Calu3 (cell line): ENCODE measurements at regions of chr16 and their contacts with region 1.

Region 1: GRCh38 chr16:48542020-48542473 is 67.9 kb downstream of the N4BP1 start:
- DNase-seq: peak; percentile 55
- H3K4me3 Mint-ChIP-seq: no peak overlapping the region
- H3K27ac Mint-ChIP-seq: no peak overlapping the region
- H3K4me1 Mint-ChIP-seq: peaks cover 8% of the 10 kb centered on the region
- H3K27me3 Mint-ChIP-seq: no peaks in the 10 kb centered on the region
- CTCF ChIP-seq: peak; percentile 54

Region 2: GRCh38 chr16:48250520-48251278 is 291.3 kb before region 1 on chr16:
- CTCF ChIA-PET with region 1: no interaction called
- intact Hi-C with region 1: loop called (anchors 10 kb)
- DNase-seq: no peak
- H3K4me3 Mint-ChIP-seq: peak overlapping the region; percentile 11
- H3K27ac Mint-ChIP-seq: peak overlapping the region; percentile 61
- H3K4me1 Mint-ChIP-seq: peaks cover 26% of the 10 kb centered on the region
- H3K27me3 Mint-ChIP-seq: no peaks in the 10 kb centered on the region
- CTCF ChIP-seq: no peak